Activated B cell treated with CpG ODN at 0.5 μM for 24 hours (primary cell): ENCODE measurements at regions of chr14 and their contacts with region 1.

Region 1: GRCh38 chr14:100192672-100193416 is 33.4 kb upstream of the DEGS2 start:
- DNase-seq: peak; percentile 98
- ATAC-seq: peak; percentile 99
- H3K4me3 Mint-ChIP-seq: peak overlapping the region; percentile 75
- H3K27ac Mint-ChIP-seq: peak overlapping the region; percentile 85
- H3K4me1 Mint-ChIP-seq: peaks cover 5% of the 10 kb centered on the region
- H3K27me3 Mint-ChIP-seq: no peaks in the 10 kb centered on the region
- CTCF ChIP-seq: no peak

Region 2: GRCh38 chr14:99729991-99730868 is 462.6 kb before region 1 on chr14:
- CTCF ChIA-PET with region 1: no interaction called
- POLR2A ChIA-PET with region 1: no interaction called
- intact Hi-C with region 1: loop called (anchors 5 kb)
- DNase-seq: peak; percentile 49
- ATAC-seq: peak; percentile 70
- H3K4me3 Mint-ChIP-seq: peak overlapping the region; percentile 32
- H3K27ac Mint-ChIP-seq: no peak overlapping the region
- H3K4me1 Mint-ChIP-seq: peaks cover 2% of the 10 kb centered on the region
- H3K27me3 Mint-ChIP-seq: peaks cover 45% of the 10 kb centered on the region
- CTCF ChIP-seq: no peak

Region 3: GRCh38 chr14:100056964-100057795 is 135.7 kb before region 1 on chr14:
- CTCF ChIA-PET with region 1: interaction called, 12 read pairs
- POLR2A ChIA-PET with region 1: interaction called, 4 read pairs
- intact Hi-C with region 1: loop called (anchors 1 kb)
- DNase-seq: no peak
- ATAC-seq: peak; percentile 82
- H3K4me3 Mint-ChIP-seq: no peak overlapping the region
- H3K27ac Mint-ChIP-seq: peak overlapping the region; percentile 43
- H3K4me1 Mint-ChIP-seq: peaks cover 32% of the 10 kb centered on the region
- H3K27me3 Mint-ChIP-seq: no peaks in the 10 kb centered on the region
- CTCF ChIP-seq: no peak

Region 4: DNA sequence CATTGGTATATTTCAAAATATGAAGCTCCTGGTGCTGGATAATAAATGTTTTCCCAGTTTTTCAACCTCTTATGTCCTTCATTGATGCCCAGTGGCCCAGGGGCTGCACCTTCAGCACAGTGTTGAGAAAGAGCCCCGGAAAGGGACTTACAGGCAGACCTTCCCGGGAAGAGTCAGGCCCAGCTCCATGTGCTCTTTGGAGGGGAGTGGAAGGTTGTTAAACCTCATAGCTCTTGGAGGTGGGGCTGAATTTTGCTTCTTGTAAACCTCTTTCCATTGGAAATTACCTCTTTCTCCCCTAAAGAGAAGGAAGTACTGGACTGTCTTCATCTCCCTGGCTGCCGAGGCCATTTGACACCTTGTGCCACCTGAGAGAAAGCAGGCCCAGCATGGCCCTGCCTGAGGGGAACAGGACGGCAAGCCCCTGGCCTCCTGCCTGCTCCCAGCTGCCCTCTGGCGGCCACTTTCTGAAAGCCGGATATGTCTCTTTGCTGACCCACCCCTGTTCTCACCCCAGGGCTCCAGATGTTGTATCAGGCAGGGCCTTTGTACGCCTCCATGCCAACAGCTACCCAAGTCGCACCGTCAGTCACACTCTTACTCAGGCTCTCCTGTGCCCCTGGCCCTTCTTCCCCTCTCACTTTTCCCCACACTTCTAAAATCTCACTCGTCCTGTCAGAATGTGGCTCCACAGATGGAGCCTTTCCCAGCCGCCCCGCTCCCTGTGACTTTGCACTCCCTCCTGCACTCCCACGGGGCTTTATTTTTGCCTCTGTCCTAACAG is 84.6 kb before region 1 on chr14:
- CTCF ChIA-PET with region 1: interaction called, 27 read pairs
- POLR2A ChIA-PET with region 1: interaction called, 3 read pairs
- intact Hi-C with region 1: loop called (anchors 1 kb)
- DNase-seq: peak; percentile 80
- ATAC-seq: peak; percentile 98
- H3K4me3 Mint-ChIP-seq: no peak overlapping the region
- H3K27ac Mint-ChIP-seq: peak overlapping the region; percentile 86
- H3K4me1 Mint-ChIP-seq: peaks cover 49% of the 10 kb centered on the region
- H3K27me3 Mint-ChIP-seq: no peaks in the 10 kb centered on the region
- CTCF ChIP-seq: peak; percentile 17

Region 5: DNA sequence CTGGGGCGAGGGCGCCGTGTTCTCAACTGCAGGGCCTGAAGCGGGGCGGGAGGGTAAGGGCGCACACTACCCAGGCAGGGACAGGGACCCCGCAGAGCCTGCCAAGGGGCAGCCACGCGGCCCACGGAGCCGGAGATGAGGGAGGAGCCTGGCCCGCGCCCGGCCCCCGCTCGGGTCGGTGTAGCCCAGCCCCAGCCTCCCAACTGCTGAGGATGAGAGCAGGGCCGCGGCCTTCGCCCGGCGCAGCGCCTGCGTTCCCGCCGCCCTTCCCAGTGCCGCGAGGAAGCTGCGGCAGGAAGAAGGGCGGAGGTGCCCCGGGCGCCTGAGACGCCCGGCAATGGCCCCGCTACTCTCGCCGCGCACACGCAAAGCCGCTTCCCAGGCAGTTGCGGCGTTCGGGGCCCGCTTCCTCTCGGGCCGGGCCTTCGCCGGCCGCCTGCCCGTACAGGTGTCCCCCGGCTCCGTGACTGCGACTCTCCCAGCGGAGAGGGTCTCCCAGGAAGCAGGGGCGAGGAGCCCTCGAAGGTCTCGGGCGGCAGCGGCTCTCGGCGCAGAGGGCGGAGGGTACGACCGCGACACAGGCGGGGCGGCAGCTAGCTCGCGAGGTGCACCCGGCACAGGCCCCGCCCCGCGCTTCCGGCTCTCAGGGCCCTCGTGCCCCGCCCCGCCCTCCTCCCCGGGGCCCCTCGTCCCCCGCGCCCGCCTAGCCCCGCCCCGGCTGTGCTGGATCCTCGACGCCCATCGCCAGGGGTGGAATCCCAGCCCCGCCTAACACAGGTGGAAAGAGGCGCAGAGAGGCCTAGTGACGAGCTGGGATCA is 21.3 kb after region 1 on chr14:
- CTCF ChIA-PET with region 1: interaction called, 13 read pairs
- POLR2A ChIA-PET with region 1: interaction called, 18 read pairs
- intact Hi-C with region 1: loop called (anchors 1 kb)
- DNase-seq: peak; percentile 91
- ATAC-seq: peak; percentile 96
- H3K4me3 Mint-ChIP-seq: peak overlapping the region; percentile 85
- H3K27ac Mint-ChIP-seq: peak overlapping the region; percentile 80
- H3K4me1 Mint-ChIP-seq: peaks cover 17% of the 10 kb centered on the region
- H3K27me3 Mint-ChIP-seq: no peaks in the 10 kb centered on the region
- CTCF ChIP-seq: no peak

Region 6: GRCh38 chr14:100285021-100285912 is 92.4 kb after region 1 on chr14:
- CTCF ChIA-PET with region 1: no interaction called
- POLR2A ChIA-PET with region 1: no interaction called
- intact Hi-C with region 1: loop called (anchors 1 kb)
- DNase-seq: peak; percentile 92
- ATAC-seq: peak; percentile 93
- H3K4me3 Mint-ChIP-seq: peak overlapping the region; percentile 82
- H3K27ac Mint-ChIP-seq: peak overlapping the region; percentile 85
- H3K4me1 Mint-ChIP-seq: peaks cover 10% of the 10 kb centered on the region
- H3K27me3 Mint-ChIP-seq: no peaks in the 10 kb centered on the region
- CTCF ChIP-seq: peak; percentile 71

Region 7: GRCh38 chr14:100306420-100307219 is 113.8 kb after region 1 on chr14 and contains the start of gene SLC25A29:
- CTCF ChIA-PET with region 1: no interaction called
- POLR2A ChIA-PET with region 1: no interaction called
- intact Hi-C with region 1: no loop called
- DNase-seq: peak; percentile 86
- ATAC-seq: peak; percentile 93
- H3K4me3 Mint-ChIP-seq: peak within 1 kb of the TSS; percentile 87
- H3K27ac Mint-ChIP-seq: peak within 1 kb of the TSS; percentile 66
- H3K4me1 Mint-ChIP-seq: peaks cover 21% of the 10 kb centered on the region
- H3K27me3 Mint-ChIP-seq: no peaks in the 10 kb centered on the region
- CTCF ChIP-seq: no peak
- total RNA-seq, gene SLC25A29: 20.6 and 28.8 TPM in 2 replicates

Region 8: GRCh38 chr14:100341301-100342031 is 148.6 kb after region 1 on chr14:
- CTCF ChIA-PET with region 1: no interaction called
- POLR2A ChIA-PET with region 1: no interaction called
- intact Hi-C with region 1: no loop called
- DNase-seq: no peak
- ATAC-seq: peak; percentile 93
- H3K4me3 Mint-ChIP-seq: peak overlapping the region; percentile 41
- H3K27ac Mint-ChIP-seq: peak overlapping the region; percentile 92
- H3K4me1 Mint-ChIP-seq: peaks cover 32% of the 10 kb centered on the region
- H3K27me3 Mint-ChIP-seq: no peaks in the 10 kb centered on the region
- CTCF ChIP-seq: no peak